ENCODE measurements at regions of chr13 and their contacts with region 1.

Region 1: DNA sequence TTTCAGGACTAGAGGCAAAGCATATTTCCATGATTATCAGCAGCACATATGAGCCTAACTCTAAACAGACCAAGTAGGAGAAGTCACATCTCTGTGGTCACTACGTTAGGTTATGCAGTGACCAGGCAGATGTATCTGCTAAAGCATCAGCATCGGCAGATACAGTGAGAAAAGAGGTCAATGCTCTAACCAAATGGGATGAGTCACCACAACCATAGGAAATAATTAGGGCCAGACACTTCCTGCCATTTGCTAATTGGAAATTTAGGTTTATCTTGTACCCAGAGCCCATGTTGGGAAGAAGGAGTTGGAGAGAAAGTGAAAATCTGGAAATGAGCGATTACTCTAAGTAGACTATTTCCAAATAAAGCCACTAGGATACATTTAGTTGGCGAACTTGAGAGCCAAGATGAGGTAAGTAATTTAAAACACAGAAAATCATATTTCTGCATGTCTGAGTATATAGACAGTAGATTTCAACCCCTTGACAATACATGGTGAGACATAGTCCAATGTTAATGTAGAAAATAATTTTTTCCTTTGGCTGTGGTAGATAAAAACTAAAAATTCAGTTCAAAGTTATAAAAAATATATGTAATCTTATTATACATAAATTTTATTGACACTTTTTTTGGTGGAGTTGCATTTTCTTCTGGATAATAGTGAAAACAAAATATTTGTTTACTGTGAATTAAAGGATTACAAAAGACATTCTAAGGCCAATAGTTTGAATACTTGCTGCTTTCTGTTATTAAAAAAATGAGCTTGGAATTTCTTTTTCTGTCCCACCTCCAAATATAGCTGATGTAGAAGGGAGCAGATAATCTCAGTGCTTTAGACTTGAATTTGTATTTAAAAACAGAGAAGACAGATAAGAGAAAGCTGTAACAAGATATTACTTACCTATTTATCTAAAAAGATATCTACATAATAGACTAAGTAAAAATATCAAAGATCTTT is 104.4 kb upstream of the CSNK1A1L start:
- DNase-seq: no peak
- H3K4me3 ChIP-seq: no peak overlapping the region
- H3K27ac ChIP-seq: no peak overlapping the region
- H3K4me1 ChIP-seq: no peaks in the 10 kb centered on the region
- H3K27me3 ChIP-seq: no peaks in the 10 kb centered on the region
- CTCF ChIP-seq: no peak
- POLR2A ChIP-seq: no peak

Region 2: DNA sequence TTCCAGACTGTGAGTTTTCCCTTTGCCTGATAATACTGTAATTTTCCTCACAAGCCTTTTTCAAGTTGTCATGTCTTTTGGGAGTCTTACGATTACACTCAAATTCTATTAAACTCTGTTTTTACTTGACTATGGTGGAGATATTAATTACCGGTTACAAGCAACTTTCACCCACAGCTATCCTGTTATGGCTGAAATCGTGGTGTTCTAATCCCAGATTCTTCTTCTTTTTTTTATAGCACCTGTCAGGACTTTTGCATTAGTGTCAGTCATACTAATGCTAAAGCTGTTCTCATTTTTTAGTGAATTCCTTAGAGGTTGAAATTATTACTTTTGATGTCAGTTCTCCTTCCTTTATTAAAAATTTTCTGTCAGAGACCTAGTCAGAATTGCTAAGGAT is 83.4 kb after region 1 on chr13:
- intact Hi-C with region 1: loop called (anchors 2 kb)
- DNase-seq: no peak
- H3K4me3 ChIP-seq: no peak overlapping the region
- H3K27ac ChIP-seq: no peak overlapping the region
- H3K4me1 ChIP-seq: no peaks in the 10 kb centered on the region
- H3K27me3 ChIP-seq: no peaks in the 10 kb centered on the region
- CTCF ChIP-seq: no peak
- POLR2A ChIP-seq: no peak

Region 3: DNA sequence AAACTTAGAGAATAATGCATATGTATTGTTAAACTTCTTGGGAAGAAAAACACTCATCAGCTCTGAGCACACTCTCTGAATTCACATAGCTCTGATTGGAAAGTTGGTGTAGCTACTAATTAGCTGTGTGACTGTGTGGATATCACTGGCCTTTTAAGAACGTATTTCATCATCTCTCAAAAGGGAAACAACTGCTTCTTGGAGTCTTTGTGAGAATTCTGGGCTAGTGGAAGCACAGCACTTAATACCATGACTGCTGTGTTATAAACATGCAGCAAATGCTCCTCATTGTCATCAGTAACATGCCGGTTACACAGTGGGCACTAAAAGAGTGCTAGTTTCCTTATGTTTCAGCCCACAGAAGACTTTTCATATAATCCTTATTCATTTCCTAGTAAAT is 116.4 kb after region 1 on chr13:
- intact Hi-C with region 1: no loop called
- DNase-seq: no peak
- H3K4me3 ChIP-seq: no peak overlapping the region
- H3K27ac ChIP-seq: no peak overlapping the region
- H3K4me1 ChIP-seq: no peaks in the 10 kb centered on the region
- H3K27me3 ChIP-seq: no peaks in the 10 kb centered on the region
- CTCF ChIP-seq: no peak
- POLR2A ChIP-seq: no peak